Endothelial cell of umbilical vein (primary cell): ENCODE measurements at regions of chr14 and their contacts with region 1.

Region 1: DNA sequence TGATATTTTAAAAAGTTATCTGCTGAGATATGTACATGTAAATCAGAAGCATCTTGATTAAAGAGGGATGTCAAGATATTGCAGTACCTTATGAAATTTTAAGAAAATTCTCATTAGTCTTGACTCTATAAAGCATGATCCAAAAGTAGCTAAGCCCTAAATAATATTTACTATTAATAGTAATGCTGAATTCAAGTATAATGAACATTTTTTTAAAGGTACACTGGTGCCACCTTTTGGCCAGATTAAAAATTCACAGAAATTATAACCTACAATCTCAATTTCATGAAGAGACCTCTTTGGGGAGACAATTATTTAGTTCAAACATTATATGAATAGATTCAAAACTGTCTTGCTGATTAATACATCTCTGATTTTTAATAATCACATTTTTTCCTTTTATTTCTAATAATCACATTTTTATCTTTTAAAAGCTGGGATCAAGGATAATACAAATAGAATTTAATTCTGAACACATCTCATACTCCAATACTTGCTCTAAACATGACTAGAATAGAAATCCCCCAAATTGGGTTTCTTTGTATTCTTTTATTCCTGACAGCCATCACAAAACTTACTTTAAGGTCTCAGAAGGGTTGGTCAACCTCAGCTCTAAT is 13.4 kb downstream of the AKAP5 start:
- DNase-seq: peak; percentile 60
- H3K4me3 ChIP-seq: no peak overlapping the region
- H3K27ac ChIP-seq: no peak overlapping the region
- H3K4me1 ChIP-seq: no peaks in the 10 kb centered on the region
- H3K27me3 ChIP-seq: no peaks in the 10 kb centered on the region
- CTCF ChIP-seq: peak; percentile 9 to 23
- POLR2A ChIP-seq: no peak

Region 2: DNA sequence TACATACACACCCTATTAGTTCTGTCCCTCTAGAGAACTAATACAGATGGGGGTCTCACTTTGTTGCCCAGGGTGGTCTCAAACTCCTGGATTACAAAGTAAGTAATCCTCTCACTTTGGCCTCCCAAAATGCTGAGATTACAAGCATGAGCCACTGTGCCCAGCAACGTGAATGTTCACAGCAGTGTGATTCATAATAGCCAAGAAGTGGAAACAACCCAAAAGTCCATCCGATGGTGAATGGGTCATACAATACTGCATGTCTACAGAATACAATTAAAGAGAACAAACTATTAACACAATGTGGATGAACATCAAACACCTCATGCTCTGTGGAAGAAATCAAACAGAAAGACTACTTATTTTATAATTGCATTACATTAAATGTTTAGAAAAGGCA is 683.2 kb before region 1 on chr14:
- CTCF ChIA-PET with region 1: no interaction called
- POLR2A ChIA-PET with region 1: no interaction called
- dilution Hi-C with region 1: no loop called
- intact Hi-C with region 1: loop called (anchors 5 kb)
- DNase-seq: no peak
- H3K4me3 ChIP-seq: no peak overlapping the region
- H3K27ac ChIP-seq: no peak overlapping the region
- H3K4me1 ChIP-seq: peaks cover 2% of the 10 kb centered on the region
- H3K27me3 ChIP-seq: peaks cover 0 to 2% of the 10 kb centered on the region in 2 experiments
- CTCF ChIP-seq: no peak
- POLR2A ChIP-seq: no peak

Region 3: DNA sequence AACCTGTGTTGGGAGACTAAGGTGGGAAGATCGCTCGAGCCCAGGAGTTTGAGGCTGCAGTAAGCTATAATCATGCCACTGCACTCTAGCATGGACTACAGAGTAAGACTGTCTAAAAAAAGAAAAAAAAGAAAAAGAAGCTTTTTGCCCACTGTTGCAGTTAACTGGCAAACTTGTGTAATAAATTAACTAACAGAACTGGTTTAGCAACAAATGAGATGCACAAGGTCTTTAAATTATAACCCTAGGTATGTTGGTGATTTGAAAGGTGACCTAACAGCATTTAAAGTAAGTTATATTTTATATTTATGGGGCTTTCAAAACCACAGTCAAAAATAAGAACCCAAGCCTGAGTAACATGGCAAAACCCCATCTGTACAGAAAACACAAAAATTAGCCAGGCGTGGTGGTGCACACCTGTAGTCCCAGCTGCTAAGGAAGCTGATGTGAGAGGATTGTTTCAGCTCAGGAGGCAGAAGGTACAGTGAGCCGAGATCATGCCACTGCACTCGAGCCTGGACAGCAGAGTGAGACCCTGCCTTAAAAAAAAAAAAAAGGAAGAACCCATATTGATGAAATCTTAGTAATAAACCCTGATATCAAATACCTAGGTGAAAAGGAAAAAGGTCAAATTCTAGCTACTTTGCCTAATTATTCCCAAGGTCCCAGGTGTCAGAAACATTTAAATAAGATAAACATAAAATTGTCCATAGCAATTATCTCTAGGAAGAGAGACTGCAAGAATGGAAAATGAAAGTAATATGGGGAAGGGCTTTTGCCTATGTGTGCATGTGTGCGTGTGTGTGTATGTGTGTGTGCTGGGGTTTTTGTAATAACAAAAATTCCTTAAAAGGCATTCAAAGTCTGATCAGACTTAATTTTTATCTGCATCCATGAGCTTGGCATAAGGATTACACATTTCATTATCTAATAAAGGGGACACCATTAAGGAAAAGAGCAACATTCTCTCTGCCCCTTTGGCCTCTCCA is 610.5 kb before region 1 on chr14:
- CTCF ChIA-PET with region 1: no interaction called
- POLR2A ChIA-PET with region 1: no interaction called
- dilution Hi-C with region 1: no loop called
- intact Hi-C with region 1: no loop called
- DNase-seq: peak; percentile 55
- H3K4me3 ChIP-seq: no peak overlapping the region
- H3K27ac ChIP-seq: no peak overlapping the region
- H3K4me1 ChIP-seq: peaks cover 3% of the 10 kb centered on the region
- H3K27me3 ChIP-seq: no peaks in the 10 kb centered on the region
- CTCF ChIP-seq: no peak
- POLR2A ChIP-seq: no peak

Region 4: DNA sequence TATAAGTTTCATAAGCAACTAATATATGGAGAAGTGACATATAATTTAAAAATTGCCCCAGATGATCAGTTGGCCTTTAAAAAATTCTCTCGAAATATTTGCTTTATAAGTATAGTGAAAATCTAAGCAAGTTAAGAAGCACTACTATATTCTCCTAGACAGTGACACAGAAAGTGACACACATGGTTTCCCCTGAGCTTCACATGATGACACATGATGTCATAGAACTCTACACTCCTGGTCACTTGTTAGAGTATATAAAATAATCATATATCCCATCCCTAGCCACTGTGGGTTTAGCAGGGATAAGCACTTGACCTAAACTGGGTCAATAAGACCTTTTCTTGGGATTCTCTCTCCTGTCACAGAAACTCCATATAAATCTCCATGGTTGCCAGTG is 133.2 kb before region 1 on chr14:
- CTCF ChIA-PET with region 1: interaction called, 123 read pairs
- POLR2A ChIA-PET with region 1: no interaction called
- dilution Hi-C with region 1: no loop called
- intact Hi-C with region 1: loop called (anchors 1 kb)
- DNase-seq: no peak
- H3K4me3 ChIP-seq: no peak overlapping the region
- H3K27ac ChIP-seq: no peak overlapping the region
- H3K4me1 ChIP-seq: no peaks in the 10 kb centered on the region
- H3K27me3 ChIP-seq: no peaks in the 10 kb centered on the region
- CTCF ChIP-seq: no peak
- POLR2A ChIP-seq: no peak

Region 5: DNA sequence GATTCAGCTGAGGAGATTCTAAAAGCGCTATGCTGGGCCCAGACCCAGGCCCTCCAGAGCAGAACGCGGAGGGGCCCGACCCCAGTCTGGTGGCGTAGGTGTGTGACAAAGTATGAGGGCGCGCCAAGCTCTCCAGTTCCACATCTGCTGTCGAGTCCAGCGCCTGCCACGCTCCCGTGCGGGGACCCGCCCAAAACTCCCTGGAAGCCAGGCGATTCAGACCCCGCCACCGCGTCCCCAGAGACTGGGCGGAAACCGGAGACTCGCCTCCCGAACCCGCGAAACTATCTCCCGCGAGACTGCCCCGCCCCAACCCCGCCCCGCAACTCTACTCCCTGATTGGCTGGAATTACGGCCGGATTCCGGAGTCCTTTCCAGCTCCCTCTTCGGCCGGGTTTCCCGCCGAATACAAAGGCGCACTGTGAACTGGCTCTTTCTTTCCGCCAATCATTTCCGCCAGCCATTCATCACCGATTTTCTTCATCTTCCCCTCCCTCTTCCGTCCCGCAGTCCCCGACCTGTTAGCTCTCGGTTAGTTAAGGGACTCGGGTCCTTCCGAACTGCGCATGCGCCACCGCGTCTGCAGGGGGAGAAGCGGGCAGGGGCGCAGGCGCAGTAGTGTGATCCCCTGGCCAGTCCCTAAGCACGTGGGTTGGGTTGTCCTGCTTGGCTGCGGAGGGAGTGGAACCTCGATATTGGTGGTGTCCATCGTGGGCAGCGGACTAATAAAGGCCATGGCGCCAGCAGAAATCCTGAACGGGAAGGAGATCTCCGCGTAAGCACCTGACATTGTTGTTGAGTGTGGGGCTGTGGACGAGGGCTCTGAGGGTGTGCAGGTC is 90.8 kb before region 1 on chr14 and contains the start of gene MTHFD1:
- CTCF ChIA-PET with region 1: interaction called, 12 read pairs
- POLR2A ChIA-PET with region 1: no interaction called
- dilution Hi-C with region 1: no loop called
- intact Hi-C with region 1: no loop called
- DNase-seq: peak; percentile 99
- H3K4me3 ChIP-seq: peak within 1 kb of the TSS; percentile 56 to 94 (median 88)
- H3K27ac ChIP-seq: peak within 1 kb of the TSS; percentile 68
- H3K4me1 ChIP-seq: peaks cover 16% of the 10 kb centered on the region
- H3K27me3 ChIP-seq: no peaks in the 10 kb centered on the region
- CTCF ChIP-seq: no peak
- POLR2A ChIP-seq: peak; percentile 48
- total RNA-seq, gene MTHFD1: 104 and 114 TPM in 2 replicates

Region 6: DNA sequence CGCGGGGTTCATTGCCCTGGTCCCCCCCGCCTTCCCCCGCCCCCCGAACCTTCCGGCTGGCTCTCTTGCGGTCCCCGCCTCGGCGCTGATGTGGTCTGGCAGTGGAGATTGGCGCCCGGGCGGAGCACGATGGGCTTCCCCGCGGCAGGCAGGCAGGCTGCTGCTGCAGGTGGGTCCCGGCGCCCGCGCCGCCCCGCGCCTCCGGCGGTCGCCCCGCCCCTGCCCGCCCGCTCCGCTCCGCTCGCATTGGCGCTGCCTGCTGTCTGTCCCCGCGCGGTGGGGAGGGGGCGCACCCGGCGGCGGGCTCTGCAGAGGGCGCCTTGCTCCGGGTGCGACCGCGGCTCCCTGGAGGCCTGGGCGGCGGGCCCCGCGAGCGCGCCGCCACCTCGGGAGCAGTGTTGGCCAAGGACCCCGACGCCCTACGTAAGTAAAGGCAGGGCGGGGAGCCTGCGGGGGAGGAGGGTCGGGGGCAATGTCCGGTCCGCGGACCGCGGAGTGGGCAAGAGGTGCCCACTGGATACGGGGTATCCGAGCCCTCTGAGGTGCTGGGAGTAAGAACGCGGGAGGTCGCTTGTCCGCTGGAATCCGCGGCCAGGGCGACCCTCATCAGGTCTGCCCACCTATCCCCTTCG is 13.4 kb before region 1 on chr14 and contains the start of gene AKAP5:
- CTCF ChIA-PET with region 1: interaction called, 32 read pairs
- POLR2A ChIA-PET with region 1: no interaction called
- dilution Hi-C with region 1: no loop called
- intact Hi-C with region 1: no loop called
- DNase-seq: peak; percentile 63
- H3K4me3 ChIP-seq: peak within 1 kb of the TSS; percentile 70 to 79 (median 76)
- H3K27ac ChIP-seq: no peak within 1 kb of the TSS
- H3K4me1 ChIP-seq: peaks cover 14% of the 10 kb centered on the region
- H3K27me3 ChIP-seq: no peaks in the 10 kb centered on the region
- CTCF ChIP-seq: no peak
- POLR2A ChIP-seq: no peak
- total RNA-seq, gene AKAP5: 0.75 and 1.1 TPM in 2 replicates

Region 7: DNA sequence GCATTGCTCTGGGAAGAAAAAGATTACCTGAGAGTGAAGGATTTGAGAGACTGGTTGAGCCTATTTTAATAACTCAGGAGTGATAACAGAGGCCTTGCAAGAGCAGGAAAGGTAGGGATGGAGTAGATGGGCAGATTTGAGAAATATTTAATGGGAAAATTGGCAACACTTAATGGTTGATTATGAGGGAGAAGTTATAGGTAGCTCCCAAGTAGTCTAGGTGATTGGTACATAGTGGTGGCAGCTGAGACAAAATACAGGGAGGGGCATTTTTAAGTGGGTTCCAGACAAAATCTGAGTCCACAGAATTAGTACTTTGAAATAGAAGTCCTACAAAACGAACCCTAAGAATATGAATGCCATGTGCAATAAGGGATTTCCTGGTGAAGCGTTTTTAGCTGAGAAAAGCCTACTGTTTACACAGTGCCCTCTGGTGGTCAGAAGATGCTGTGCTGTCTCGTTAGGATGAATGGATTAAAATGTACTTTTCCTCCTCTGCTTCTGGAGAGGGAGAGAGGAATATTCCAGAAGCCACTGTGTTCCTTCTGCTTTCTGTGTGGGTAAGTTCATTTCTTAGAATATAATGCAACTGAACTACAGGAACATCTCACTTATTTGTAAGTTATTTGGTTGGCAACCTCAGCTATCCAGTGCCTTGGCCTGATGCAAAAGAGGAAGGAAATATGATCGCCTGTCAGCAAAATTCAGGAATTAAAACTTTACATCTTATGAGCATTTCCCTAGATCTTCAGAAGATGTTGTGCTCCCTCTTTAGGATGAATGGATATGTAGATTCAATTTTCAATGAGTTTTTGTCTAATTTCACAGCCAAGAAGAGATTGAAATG is 32.3 kb after region 1 on chr14:
- CTCF ChIA-PET with region 1: interaction called, 17 read pairs
- POLR2A ChIA-PET with region 1: no interaction called
- dilution Hi-C with region 1: no loop called
- intact Hi-C with region 1: no loop called
- DNase-seq: peak; percentile 72
- H3K4me3 ChIP-seq: no peak overlapping the region
- H3K27ac ChIP-seq: no peak overlapping the region
- H3K4me1 ChIP-seq: peaks cover 21% of the 10 kb centered on the region
- H3K27me3 ChIP-seq: no peaks in the 10 kb centered on the region
- CTCF ChIP-seq: peak; percentile 78 to 84
- POLR2A ChIP-seq: no peak

Region 8: GRCh38 chr14:65403231-65403630 is 924.5 kb after region 1 on chr14:
- CTCF ChIA-PET with region 1: no interaction called
- POLR2A ChIA-PET with region 1: no interaction called
- dilution Hi-C with region 1: no loop called
- intact Hi-C with region 1: no loop called
- DNase-seq: no peak
- H3K4me3 ChIP-seq: no peak overlapping the region
- H3K27ac ChIP-seq: no peak overlapping the region
- H3K4me1 ChIP-seq: no peaks in the 10 kb centered on the region
- H3K27me3 ChIP-seq: no peaks in the 10 kb centered on the region
- CTCF ChIP-seq: no peak
- POLR2A ChIP-seq: no peak